ENCODE measurements at regions of chr1 and their contacts with region 1.

Region 1: GRCh38 chr1:248807067-248807737 is 18.5 kb downstream of the SH3BP5L start:
- DNase-seq: peak; percentile 85
- H3K4me3 Mint-ChIP-seq: no peak overlapping the region
- H3K27ac Mint-ChIP-seq: no peak overlapping the region
- H3K4me1 Mint-ChIP-seq: peaks cover 11% of the 10 kb centered on the region
- H3K27me3 Mint-ChIP-seq: peaks cover 2% of the 10 kb centered on the region

Region 2: DNA sequence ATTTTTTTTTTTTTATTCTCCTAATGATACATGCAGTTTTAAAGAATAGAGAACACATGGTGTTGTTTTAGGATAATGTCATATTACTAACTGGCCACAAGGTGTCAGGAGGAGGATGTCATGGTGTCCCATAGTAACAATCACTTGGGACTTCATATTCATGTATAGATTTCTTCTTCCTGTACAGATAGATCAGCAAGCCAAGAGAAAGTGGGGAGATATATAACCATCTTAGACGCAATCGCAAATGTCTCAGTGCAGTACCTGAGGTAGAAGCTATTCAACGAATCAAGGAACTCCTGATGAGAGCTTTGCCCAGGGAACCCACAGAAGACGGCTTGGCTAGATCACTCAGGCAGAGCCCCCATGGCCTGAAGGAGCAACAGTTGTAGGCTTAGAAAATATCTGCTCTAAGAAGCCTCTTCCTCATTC is 184.6 kb before region 1 on chr1:
- intact Hi-C with region 1: loop called (anchors 2 kb)
- DNase-seq: no peak
- H3K4me3 Mint-ChIP-seq: no peak overlapping the region
- H3K27ac Mint-ChIP-seq: no peak overlapping the region
- H3K4me1 Mint-ChIP-seq: peaks cover 11% of the 10 kb centered on the region
- H3K27me3 Mint-ChIP-seq: no peaks in the 10 kb centered on the region